A549 (cell line): ENCODE measurements at regions of chr12 and their contacts with region 1.

Region 1: GRCh38 chr12:21677622-21678277 is 20.1 kb upstream of the LDHB start:
- DNase-seq: peak in 1 of 2 experiments; percentile 14
- ATAC-seq: no peak
- H3K4me3 ChIP-seq: no peak overlapping the region
- H3K27ac ChIP-seq: no peak overlapping the region; a peak in 1 of 6 replicates
- H3K4me1 ChIP-seq: peaks cover 13% of the 10 kb centered on the region; the same call in 1 of the 3 replicates
- CTCF ChIP-seq: no peak
- EP300 ChIP-seq: no peak
- POLR2A ChIP-seq: no peak
- RAD21 ChIP-seq: no peak

Region 2: GRCh38 chr12:21559855-21560569 is 117.7 kb before region 1 on chr12:
- CTCF ChIA-PET with region 1: interaction called, 11 read pairs
- POLR2A ChIA-PET with region 1: no interaction called
- DNase-seq: peak; percentile 19 to 74
- ATAC-seq: peak; percentile 92 to 97
- H3K4me3 ChIP-seq: no peak overlapping the region
- H3K27ac ChIP-seq: peak overlapping the region; percentile 63 to 78; a peak in 5 of 6 replicates
- H3K4me1 ChIP-seq: peaks cover 54% of the 10 kb centered on the region
- CTCF ChIP-seq: no peak
- EP300 ChIP-seq: peak in 1 of 2 experiments; percentile 49; a peak in 2 of 5 replicates
- POLR2A ChIP-seq: no peak
- RAD21 ChIP-seq: no peak; a peak in 1 of 5 replicates

Region 3: GRCh38 chr12:21607701-21608100 is 70.0 kb before region 1 on chr12:
- CTCF ChIA-PET with region 1: interaction called, 45 read pairs
- POLR2A ChIA-PET with region 1: no interaction called
- DNase-seq: peak in 1 of 2 experiments; percentile 61
- ATAC-seq: peak; percentile 68 to 78; a peak in 5 of 6 replicates
- H3K4me3 ChIP-seq: no peak overlapping the region
- H3K27ac ChIP-seq: peak overlapping the region in 1 of 2 experiments; percentile 18; a peak in 1 of 6 replicates
- H3K4me1 ChIP-seq: 0 out of 3 replicates have a peak, but pooled peaks cover 3% of the 10 kb centered on the region
- CTCF ChIP-seq: peak; percentile 75
- EP300 ChIP-seq: no peak
- POLR2A ChIP-seq: no peak
- RAD21 ChIP-seq: peak; percentile 74 to 87

Region 4: DNA sequence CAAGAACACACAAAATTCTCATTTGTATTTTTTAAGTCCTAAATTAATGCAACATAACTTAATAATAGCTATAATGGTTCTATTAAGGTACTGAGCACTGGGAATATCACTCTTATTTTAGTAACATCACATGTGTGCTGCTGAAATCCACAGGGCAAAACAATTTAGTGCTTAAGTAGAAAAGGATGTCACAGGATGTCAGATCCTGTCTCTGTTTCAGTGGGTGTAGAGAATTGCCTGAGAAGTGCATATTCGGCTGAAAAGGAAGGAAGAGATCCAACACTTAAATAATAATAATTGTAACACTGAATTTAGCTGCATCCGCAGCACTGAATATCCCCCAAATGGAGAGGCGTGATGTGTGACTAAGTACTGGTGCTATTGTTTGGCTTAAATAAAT is 28.7 kb before region 1 on chr12:
- CTCF ChIA-PET with region 1: interaction called, 12 read pairs
- POLR2A ChIA-PET with region 1: no interaction called
- DNase-seq: no peak
- ATAC-seq: no peak
- H3K4me3 ChIP-seq: no peak overlapping the region
- H3K27ac ChIP-seq: no peak overlapping the region
- H3K4me1 ChIP-seq: peaks cover 93% of the 10 kb centered on the region
- CTCF ChIP-seq: no peak
- EP300 ChIP-seq: no peak
- POLR2A ChIP-seq: no peak
- RAD21 ChIP-seq: no peak

Region 5: DNA sequence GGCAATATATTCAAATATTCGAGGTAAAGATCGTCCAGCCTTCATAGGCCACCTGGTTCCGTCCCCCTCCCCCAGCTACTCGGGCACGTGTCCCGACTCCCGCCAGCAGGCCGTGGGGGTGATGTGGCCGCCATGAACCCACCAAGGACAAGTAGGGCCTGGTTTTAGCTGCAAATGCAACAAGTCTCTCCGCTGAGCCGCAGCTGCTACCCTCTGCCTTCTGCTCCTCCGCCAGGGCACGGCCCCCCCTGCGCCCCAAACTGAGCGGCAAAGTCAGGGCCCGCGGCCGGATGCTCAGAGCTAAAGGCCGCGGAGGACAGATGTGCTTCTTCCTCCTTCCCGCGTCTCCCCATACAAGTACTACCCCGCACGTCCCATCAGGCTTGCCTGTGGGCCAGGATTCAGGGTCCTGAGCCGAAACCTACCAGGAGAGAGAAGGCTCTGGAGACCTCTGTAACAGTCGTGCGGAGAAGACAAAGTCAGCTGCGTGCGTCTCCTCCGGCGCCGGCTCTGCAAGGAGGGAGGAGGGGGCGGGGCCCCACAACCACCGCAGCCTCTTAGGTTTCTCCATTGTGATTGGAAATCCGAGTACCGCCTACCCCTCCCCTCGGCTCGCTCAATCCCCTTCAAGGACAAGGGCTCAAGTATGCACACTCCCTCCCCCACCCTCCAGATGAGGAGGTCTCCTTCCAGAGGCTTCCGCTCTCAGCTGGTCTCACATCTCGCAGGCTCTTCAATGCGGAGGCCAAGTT is 20.2 kb before region 1 on chr12 and contains the start of gene LDHB:
- CTCF ChIA-PET with region 1: interaction called, 12 read pairs
- POLR2A ChIA-PET with region 1: interaction called, 7 read pairs
- DNase-seq: peak; percentile 86 to 98
- ATAC-seq: peak; percentile 97 to 98
- H3K4me3 ChIP-seq: peak within 1 kb of the TSS; percentile 92
- H3K27ac ChIP-seq: peak within 1 kb of the TSS; percentile 97 to 98
- H3K4me1 ChIP-seq: peaks cover 34% of the 10 kb centered on the region
- CTCF ChIP-seq: no peak
- EP300 ChIP-seq: no peak
- POLR2A ChIP-seq: peak; percentile 90
- RAD21 ChIP-seq: no peak
- polyA plus RNA-seq, gene LDHB: 1,881 and 2,260 TPM in 2 replicates

Region 6: GRCh38 chr12:21843795-21844194 is 166.0 kb after region 1 on chr12:
- CTCF ChIA-PET with region 1: no interaction called
- POLR2A ChIA-PET with region 1: no interaction called
- DNase-seq: no peak
- ATAC-seq: no peak
- H3K4me3 ChIP-seq: no peak overlapping the region
- H3K27ac ChIP-seq: no peak overlapping the region
- H3K4me1 ChIP-seq: no peaks in the 10 kb centered on the region
- CTCF ChIP-seq: no peak
- EP300 ChIP-seq: no peak
- POLR2A ChIP-seq: no peak
- RAD21 ChIP-seq: no peak

Region 7: DNA sequence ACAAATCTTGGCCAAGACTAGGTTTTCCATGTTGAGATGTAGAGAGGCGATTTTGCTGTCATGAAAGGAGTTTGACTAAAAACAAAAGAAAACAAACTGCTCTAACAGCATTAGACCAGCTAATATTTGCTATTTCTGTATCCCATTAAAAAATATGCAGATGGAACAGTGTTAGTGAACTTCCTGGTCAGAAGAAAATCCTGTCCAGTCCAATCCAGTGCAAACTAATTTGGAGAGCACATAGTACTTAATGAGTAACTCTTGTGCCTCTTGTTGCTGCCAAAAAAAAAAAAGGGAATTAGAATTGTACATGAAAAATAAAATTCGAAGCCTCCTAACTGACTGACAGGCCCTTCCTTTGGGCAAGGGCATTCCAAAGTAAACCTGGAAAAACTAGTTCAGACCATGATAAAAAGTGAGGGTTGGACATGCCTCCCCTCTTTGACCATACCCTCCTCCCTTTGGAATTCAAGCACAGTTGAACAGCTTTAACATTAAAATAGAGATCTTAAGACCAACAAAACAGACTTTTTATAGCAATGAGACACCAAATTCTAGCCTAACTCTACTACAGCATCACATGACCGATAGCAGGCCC is 1246.1 kb after region 1 on chr12:
- CTCF ChIA-PET with region 1: no interaction called
- POLR2A ChIA-PET with region 1: no interaction called
- DNase-seq: no peak
- ATAC-seq: no peak
- H3K4me3 ChIP-seq: no peak overlapping the region
- H3K27ac ChIP-seq: no peak overlapping the region
- H3K4me1 ChIP-seq: no peaks in the 10 kb centered on the region
- CTCF ChIP-seq: no peak
- EP300 ChIP-seq: no peak
- POLR2A ChIP-seq: no peak
- RAD21 ChIP-seq: no peak